PC-9 (cell line): ENCODE measurements at regions of chr10 and their contacts with region 1.

Region 1: DNA sequence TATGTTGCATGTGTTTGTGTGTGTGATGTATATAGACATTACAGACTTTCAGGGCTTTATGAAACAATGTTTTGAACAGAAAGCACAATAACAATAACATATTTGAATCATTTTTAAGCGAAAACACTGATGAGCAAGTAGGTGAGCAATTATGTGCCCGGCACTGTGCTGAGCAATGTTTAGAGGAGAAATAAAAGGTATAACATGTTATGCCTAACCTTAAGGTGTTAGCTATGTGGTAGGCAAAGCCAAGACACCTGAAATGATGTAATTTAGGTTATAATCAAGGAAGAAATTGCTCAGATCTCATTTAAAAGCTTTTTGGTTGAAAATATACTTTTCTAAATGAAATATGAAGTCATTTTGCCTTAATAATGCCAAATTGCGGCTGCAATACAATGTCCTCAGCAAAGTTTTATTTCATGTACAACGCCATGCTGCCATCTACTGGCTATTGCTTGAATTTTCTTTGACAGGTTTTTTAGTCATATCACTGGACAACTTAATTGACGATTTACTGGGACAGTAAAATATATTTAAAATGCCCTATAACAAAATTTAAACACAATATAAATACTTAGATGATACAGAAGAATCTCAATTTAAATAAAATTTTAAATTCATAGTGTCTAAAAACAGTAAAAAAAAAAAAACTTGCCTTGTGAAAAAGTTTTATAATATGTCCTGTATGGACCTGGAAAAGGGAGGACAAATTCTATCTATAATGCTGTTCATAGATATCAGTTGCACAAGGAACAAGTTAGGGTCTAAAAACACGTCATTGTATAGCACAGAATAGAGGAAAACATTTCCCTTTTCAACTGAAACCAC is 131.1 kb upstream of the CDK1 start:
- DNase-seq: peak in 1 of 2 experiments; percentile 49
- H3K4me3 ChIP-seq: no peak overlapping the region
- H3K27ac ChIP-seq: no peak overlapping the region
- H3K4me1 ChIP-seq: peaks cover 13% of the 10 kb centered on the region
- H3K27me3 ChIP-seq: no peaks in the 10 kb centered on the region
- CTCF ChIP-seq: peak; percentile 92

Region 2: DNA sequence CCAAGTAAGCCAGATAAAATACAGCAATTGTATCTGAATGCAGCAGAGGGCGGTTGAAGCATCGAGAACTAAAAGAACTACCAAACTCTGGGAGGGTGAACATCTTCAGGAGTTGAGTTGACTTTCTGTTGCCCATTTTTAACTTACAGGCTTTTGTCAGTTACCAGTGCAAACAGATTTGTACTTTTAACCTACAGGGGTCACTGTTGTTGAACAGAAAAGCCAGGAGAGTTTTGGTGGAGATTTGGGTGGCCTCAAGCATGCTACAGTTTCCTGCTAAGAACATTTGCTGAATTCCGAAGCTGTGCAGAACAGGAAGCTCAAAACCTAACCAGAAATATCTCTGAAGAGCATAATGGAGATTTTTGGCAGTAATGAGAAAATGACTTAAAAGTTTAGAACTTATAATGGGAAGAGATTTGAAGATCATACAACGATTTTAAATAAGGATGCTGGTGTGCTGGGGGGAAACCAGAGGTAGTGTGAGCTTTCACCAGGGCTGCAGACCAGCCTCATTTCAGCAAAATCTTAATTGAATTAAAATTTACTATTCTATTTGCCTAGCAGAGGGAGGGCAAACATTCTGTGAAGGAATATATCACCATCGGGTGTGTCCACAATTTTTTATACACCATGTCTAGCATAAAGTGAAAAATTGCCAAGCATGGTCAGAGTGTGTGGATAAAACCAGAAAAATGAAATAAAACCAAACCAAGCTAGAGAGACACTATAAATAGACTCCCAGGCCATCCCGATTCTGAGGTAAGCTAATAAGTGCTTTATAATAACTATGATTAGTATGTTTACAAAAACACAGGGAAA is 532.2 kb before region 1 on chr10:
- CTCF ChIA-PET with region 1: no interaction called
- POLR2A ChIA-PET with region 1: no interaction called
- intact Hi-C with region 1: loop called (anchors 5 kb)
- DNase-seq: peak in 1 of 2 experiments; percentile 16
- H3K4me3 ChIP-seq: no peak overlapping the region
- H3K27ac ChIP-seq: no peak overlapping the region
- H3K4me1 ChIP-seq: no peaks in the 10 kb centered on the region
- H3K27me3 ChIP-seq: no peaks in the 10 kb centered on the region
- CTCF ChIP-seq: peak; percentile 76

Region 3: GRCh38 chr10:60237977-60238758 is 409.0 kb before region 1 on chr10:
- CTCF ChIA-PET with region 1: no interaction called
- POLR2A ChIA-PET with region 1: no interaction called
- intact Hi-C with region 1: loop called (anchors 1 kb)
- DNase-seq: peak in 1 of 2 experiments; percentile 34
- H3K4me3 ChIP-seq: no peak overlapping the region
- H3K27ac ChIP-seq: no peak overlapping the region
- H3K4me1 ChIP-seq: no peaks in the 10 kb centered on the region
- H3K27me3 ChIP-seq: no peaks in the 10 kb centered on the region
- CTCF ChIP-seq: peak; percentile 53

Region 4: DNA sequence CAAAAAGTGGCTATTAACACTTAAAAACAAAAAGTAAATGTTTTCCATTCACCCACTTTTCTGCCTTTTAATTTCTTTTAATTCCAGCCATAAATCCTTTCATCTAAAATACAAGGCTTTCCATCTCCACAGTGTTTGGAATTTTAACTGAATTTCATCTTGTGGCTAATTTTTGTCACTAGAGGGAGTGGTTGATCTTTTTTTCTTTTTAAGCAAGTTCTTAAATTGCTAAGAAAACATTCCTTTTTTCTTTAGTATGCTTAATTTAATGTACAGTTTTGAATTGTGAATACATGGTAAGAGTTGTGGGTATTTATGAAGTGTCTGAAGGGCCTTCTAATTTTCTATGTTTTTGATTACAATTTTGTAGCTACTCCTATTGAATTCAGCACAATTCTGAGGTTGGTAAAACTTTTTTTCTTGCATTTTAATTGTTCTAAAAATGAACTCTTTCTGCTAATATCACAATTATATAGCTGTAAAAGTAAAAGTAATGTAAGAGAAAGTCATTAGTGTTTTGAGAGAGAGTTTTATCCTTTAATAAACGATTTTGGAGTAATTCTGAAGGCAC is 202.6 kb before region 1 on chr10:
- CTCF ChIA-PET with region 1: interaction called, 8 read pairs
- POLR2A ChIA-PET with region 1: no interaction called
- intact Hi-C with region 1: loop called (anchors 1 kb)
- DNase-seq: no peak
- H3K4me3 ChIP-seq: no peak overlapping the region
- H3K27ac ChIP-seq: no peak overlapping the region
- H3K4me1 ChIP-seq: peaks cover 13% of the 10 kb centered on the region
- H3K27me3 ChIP-seq: no peaks in the 10 kb centered on the region
- CTCF ChIP-seq: peak; percentile 82

Region 5: GRCh38 chr10:60769406-60769805 is 122.2 kb after region 1 on chr10:
- CTCF ChIA-PET with region 1: interaction called, 4 read pairs
- POLR2A ChIA-PET with region 1: no interaction called
- intact Hi-C with region 1: loop called (anchors 1 kb)
- DNase-seq: no peak
- H3K4me3 ChIP-seq: no peak overlapping the region
- H3K27ac ChIP-seq: no peak overlapping the region
- H3K4me1 ChIP-seq: no peaks in the 10 kb centered on the region
- H3K27me3 ChIP-seq: no peaks in the 10 kb centered on the region
- CTCF ChIP-seq: no peak